Ascending aorta (tissue), 2 donors: ENCODE measurements at regions of chr13 and their contacts with region 1.

Region 1: DNA sequence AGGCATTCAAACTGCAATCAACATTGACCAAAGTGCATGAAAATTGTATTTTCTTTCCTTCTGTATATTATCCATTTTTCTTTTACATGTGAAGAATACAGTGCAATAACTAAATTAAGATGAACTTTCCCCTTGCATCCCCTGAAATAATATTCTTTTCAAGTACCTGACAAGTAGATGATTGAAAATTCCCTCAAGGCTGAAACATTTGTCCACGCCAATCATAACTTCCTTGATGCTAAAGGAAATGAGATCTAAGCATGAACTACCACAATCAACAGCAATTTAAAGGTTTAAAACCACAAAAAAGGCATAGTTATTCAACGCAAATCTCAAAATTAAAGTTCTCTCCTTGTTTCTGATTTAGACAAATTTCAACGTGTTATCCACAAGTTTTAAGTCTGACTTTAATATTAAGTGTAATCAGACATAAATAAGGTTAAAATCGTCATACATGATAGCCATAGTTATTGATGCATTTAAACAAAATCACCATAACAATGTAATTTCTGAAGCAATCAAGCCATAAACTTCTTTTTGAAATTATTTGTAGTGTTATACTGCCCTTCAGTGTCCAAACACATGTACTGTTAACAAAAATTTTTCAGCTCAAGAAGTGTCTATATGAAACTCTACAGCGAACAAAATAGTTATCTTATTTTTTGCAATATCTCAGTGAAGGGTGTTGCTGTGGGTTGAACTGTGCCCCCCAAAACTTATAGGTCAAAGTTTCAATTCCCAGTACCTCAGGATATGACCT is 169.5 kb downstream of the DCLK1 start:
- DNase-seq: no peak
- H3K4me3 ChIP-seq: no peak overlapping the region
- H3K27ac ChIP-seq: no peak overlapping the region
- H3K4me1 ChIP-seq: no peaks in the 10 kb centered on the region
- H3K27me3 ChIP-seq: no peaks in the 10 kb centered on the region
- CTCF ChIP-seq: peak; percentile 19 to 32 (median 26)

Region 2: DNA sequence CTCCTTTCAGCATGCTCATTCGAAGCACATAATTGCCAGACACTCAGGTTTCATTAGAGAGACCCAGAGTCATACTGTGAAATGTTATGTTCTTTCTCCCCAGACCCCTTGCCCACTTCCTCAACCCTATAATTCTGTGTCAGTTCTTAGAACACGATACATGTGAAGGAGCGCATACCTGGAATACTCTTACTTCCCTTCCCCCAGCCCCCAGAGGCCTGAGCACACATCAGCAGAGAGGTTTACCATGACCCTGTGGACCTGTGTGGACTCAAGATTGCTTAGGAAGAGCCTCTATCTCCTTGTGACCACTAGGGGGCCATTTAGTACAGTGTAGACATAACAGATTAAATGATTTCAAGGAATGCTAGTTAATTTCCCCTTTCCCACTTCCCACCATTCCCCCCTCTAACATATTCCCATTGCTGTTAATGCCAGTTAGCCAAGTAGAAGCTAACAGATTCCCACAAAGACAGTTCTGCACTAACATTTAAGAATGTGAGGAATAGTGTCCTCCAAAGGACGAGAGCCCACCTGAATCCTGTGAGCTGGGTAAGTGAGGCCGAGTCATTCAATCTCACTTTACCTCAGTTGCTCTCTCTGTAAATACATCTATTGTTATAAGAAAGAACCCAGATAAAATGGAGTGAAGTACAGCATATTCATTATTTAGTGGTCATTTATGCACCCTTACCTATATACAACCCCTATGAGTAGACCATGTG is 330.9 kb before region 1 on chr13:
- intact Hi-C with region 1: loop called (anchors 5 kb)
- DNase-seq: no peak
- H3K4me3 ChIP-seq: no peak overlapping the region
- H3K27ac ChIP-seq: no peak overlapping the region
- H3K4me1 ChIP-seq: no peaks in the 10 kb centered on the region
- H3K27me3 ChIP-seq: no peaks in the 10 kb centered on the region
- CTCF ChIP-seq: peak in 2 of 3 experiments; percentile 45 to 51

Region 3: DNA sequence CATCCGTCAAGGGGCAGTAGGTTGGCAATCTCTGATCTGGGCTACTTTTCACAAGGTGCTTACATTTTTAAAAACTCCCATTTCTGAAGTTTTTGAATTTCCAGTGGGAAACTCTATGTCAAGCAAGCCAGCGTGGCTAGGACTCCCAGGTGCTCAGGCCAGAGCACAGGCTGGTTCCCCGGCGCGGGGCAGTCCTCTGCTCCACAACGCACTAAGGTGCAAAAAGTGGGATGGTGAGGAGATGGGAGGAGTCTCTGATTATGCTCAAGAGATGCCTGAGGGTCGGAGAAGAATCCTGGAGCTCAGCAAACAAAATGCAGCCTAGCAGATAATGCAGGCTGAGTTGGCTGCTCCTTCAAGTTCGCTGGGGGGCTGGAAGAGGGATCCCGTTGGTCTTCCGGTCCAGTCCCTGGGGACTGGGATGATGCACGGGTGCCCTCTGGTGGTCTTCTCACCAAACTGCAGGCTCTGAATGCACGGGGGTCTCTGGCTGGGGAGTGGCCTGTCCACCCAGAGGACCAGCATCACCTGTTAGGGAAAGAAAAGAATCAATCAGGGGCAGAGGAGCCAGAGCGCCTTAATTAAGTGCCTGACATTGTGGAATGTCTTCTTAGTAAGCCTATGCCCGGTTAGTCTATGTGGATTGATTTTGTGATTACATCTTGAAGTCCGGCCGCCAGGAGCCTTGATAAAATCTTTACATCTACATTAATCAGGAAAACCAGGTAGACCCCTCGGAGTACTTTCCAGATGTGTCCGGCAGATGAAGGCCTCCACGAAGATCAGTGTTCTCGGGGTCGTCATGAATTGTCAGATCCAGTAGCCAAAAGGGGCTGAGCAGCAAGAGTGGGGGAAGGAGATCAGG is 240.7 kb before region 1 on chr13:
- intact Hi-C with region 1: loop called (anchors 5 kb)
- DNase-seq: no peak
- H3K4me3 ChIP-seq: peak overlapping the region in 1 of 2 donors; percentile 13
- H3K27ac ChIP-seq: no peak overlapping the region
- H3K4me1 ChIP-seq: peaks cover 0 to 3% of the 10 kb centered on the region in 2 donors
- H3K27me3 ChIP-seq: no peaks in the 10 kb centered on the region
- CTCF ChIP-seq: peak; percentile 41 to 78 (median 70)